Heart left ventricle (tissue), 16 donors: ENCODE measurements at regions of chr1 and their contacts with region 1.

Region 1: DNA sequence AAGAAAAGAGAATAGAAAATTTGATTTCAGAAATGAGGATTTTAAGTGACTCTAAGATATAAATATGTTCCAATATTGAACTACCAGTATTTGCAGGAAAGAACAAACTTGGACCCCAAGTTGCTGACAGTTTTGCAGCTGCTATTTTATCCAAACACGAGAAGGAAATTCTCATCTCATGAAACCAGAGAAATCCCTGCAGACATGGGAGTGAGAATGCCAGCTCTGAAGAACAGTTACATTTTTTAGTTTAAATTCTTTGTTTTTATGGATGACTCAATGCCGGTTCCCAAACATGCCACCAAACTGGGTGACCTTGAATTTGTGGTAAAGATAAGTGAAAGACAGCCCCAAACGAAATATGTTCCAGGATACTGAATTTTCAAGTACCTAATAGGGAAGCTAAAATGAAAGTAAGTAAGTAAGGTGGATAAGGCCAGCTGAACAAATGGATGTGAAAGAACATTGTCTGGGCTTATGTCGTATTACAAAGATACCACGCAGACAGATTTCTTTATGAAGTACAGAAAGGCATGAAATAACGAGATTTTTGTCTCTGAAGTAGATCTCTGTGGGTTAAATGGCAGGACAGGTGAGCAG is 19.9 kb downstream of the TLR5 start:
- DNase-seq: no peak
- ATAC-seq: no peak
- H3K4me3 ChIP-seq: peak overlapping the region in 3 of 12 donors; percentile 4 to 32 (median 23)
- H3K27ac ChIP-seq: peak overlapping the region in 2 of 12 donors; percentile 13 to 35
- H3K4me1 ChIP-seq: peaks cover 0 to 14% (median 2%) of the 10 kb centered on the region in 12 donors
- H3K27me3 ChIP-seq: no peaks in the 10 kb centered on the region
- CTCF ChIP-seq: no peak
- POLR2A ChIP-seq: no peak

Region 2: GRCh38 chr1:222792744-222793143 is 330.4 kb before region 1 on chr1:
- intact Hi-C with region 1: loop called in 9 of 10 experiments (anchors 2 to 10 kb)
- DNase-seq: no peak
- ATAC-seq: no peak
- H3K4me3 ChIP-seq: no peak overlapping the region
- H3K27ac ChIP-seq: no peak overlapping the region
- H3K4me1 ChIP-seq: peaks cover 0 to 4% (median 0%) of the 10 kb centered on the region in 12 donors
- H3K27me3 ChIP-seq: no peaks in the 10 kb centered on the region
- CTCF ChIP-seq: peak; percentile 9 to 74 (median 61)
- POLR2A ChIP-seq: no peak

Region 3: GRCh38 chr1:223062177-223062576 is 60.9 kb before region 1 on chr1:
- intact Hi-C with region 1: no loop called
- DNase-seq: no peak
- ATAC-seq: no peak
- H3K4me3 ChIP-seq: no peak overlapping the region
- H3K27ac ChIP-seq: no peak overlapping the region
- H3K4me1 ChIP-seq: peaks cover 0 to 11% (median 2%) of the 10 kb centered on the region in 12 donors
- H3K27me3 ChIP-seq: no peaks in the 10 kb centered on the region
- CTCF ChIP-seq: no peak
- POLR2A ChIP-seq: no peak

Region 4: GRCh38 chr1:223087291-223088255 is 35.5 kb before region 1 on chr1:
- intact Hi-C with region 1: loop called in 9 of 10 experiments (anchors 2 to 5 kb)
- DNase-seq: no peak
- ATAC-seq: peak in 1 of 4 donors; percentile 22
- H3K4me3 ChIP-seq: no peak overlapping the region
- H3K27ac ChIP-seq: peak overlapping the region in 9 of 12 donors; percentile 17 to 83 (median 48)
- H3K4me1 ChIP-seq: peaks cover 0 to 14% (median 4%) of the 10 kb centered on the region in 12 donors
- H3K27me3 ChIP-seq: no peaks in the 10 kb centered on the region
- CTCF ChIP-seq: no peak
- POLR2A ChIP-seq: no peak